ENCODE measurements at regions of chr12 and their contacts with region 1.

Region 1: DNA sequence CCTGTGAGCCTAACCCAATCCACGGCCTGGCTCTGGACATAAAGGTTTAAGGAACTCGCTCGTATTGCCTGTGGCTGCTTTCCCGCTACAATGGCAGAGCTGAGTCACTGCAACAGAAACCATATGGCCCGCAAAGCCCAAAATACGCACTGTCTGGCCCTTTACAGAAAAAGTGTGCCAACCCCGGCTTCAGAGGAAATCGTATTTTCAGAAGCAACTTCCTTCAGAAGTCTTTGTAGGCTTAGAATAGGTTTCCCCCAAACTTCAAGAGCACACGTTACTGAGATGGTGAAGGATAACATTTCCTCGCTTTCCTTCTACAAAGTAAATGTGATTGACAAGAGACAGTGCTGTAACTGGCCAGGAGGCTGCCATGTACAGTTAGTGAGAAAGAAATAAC is 34.8 kb upstream of the TESC start:
- DNase-seq: peak; percentile 87
- ATAC-seq: peak; percentile 88
- H3K4me3 Mint-ChIP-seq: peak overlapping the region; percentile 23
- H3K27ac Mint-ChIP-seq: peak overlapping the region; percentile 88
- H3K4me1 Mint-ChIP-seq: peaks cover 18% of the 10 kb centered on the region
- H3K27me3 Mint-ChIP-seq: no peaks in the 10 kb centered on the region
- CTCF ChIP-seq: no peak

Region 2: GRCh38 chr12:116924558-116925453 is 209.3 kb before region 1 on chr12:
- CTCF ChIA-PET with region 1: no interaction called
- POLR2A ChIA-PET with region 1: no interaction called
- intact Hi-C with region 1: loop called (anchors 10 kb)
- DNase-seq: peak; percentile 83
- ATAC-seq: peak; percentile 74
- H3K4me3 Mint-ChIP-seq: no peak overlapping the region
- H3K27ac Mint-ChIP-seq: peak overlapping the region; percentile 27
- H3K4me1 Mint-ChIP-seq: peaks cover 72% of the 10 kb centered on the region
- H3K27me3 Mint-ChIP-seq: no peaks in the 10 kb centered on the region
- CTCF ChIP-seq: no peak

Region 3: GRCh38 chr12:117025481-117026151 is 108.4 kb before region 1 on chr12:
- CTCF ChIA-PET with region 1: interaction called, 12 read pairs
- POLR2A ChIA-PET with region 1: no interaction called
- intact Hi-C with region 1: no loop called
- DNase-seq: peak; percentile 63
- ATAC-seq: peak; percentile 92
- H3K4me3 Mint-ChIP-seq: no peak overlapping the region
- H3K27ac Mint-ChIP-seq: peak overlapping the region; percentile 60
- H3K4me1 Mint-ChIP-seq: no peaks in the 10 kb centered on the region
- H3K27me3 Mint-ChIP-seq: no peaks in the 10 kb centered on the region
- CTCF ChIP-seq: peak; percentile 99